ENCODE measurements at regions of chr19 and their contacts with region 1.

Region 1: GRCh38 chr19:17938092-17938845 is 5.5 kb downstream of the CCDC124 start:
- DNase-seq: peak; percentile 94
- H3K4me3 ChIP-seq: no peak overlapping the region
- H3K27ac ChIP-seq: no peak overlapping the region
- H3K4me1 ChIP-seq: peaks cover 8 to 29% (median 18%) of the 10 kb centered on the region in 6 donors
- H3K27me3 ChIP-seq: no peaks in the 10 kb centered on the region
- CTCF ChIP-seq: peak; percentile 88 to 97 (median 93)
- POLR2A ChIP-seq: no peak

Region 2: GRCh38 chr19:17865364-17866311 is 72.6 kb before region 1 on chr19:
- intact Hi-C with region 1: no loop called
- DNase-seq: no peak
- H3K4me3 ChIP-seq: no peak overlapping the region
- H3K27ac ChIP-seq: peak overlapping the region in 1 of 8 donors; percentile 33
- H3K4me1 ChIP-seq: peaks cover 12 to 48% (median 30%) of the 10 kb centered on the region in 6 donors
- H3K27me3 ChIP-seq: peaks cover 0 to 13% (median 1%) of the 10 kb centered on the region in 7 donors
- CTCF ChIP-seq: no peak
- POLR2A ChIP-seq: no peak

Region 3: GRCh38 chr19:17996826-17997316 is 58.6 kb after region 1 on chr19:
- intact Hi-C with region 1: loop called (anchors 2 kb)
- DNase-seq: peak; percentile 95
- H3K4me3 ChIP-seq: no peak overlapping the region
- H3K27ac ChIP-seq: no peak overlapping the region
- H3K4me1 ChIP-seq: peaks cover 2 to 38% (median 25%) of the 10 kb centered on the region in 6 donors
- H3K27me3 ChIP-seq: peaks cover 0 to 18% (median 0%) of the 10 kb centered on the region in 7 donors
- CTCF ChIP-seq: peak; percentile 98 to 99 (median 99)
- POLR2A ChIP-seq: no peak

Region 4: GRCh38 chr19:18013210-18014111 is 75.2 kb after region 1 on chr19:
- intact Hi-C with region 1: no loop called
- DNase-seq: no peak
- H3K4me3 ChIP-seq: no peak overlapping the region
- H3K27ac ChIP-seq: peak overlapping the region; percentile 4 to 88 (median 47)
- H3K4me1 ChIP-seq: peaks cover 18 to 100% (median 56%) of the 10 kb centered on the region in 6 donors
- H3K27me3 ChIP-seq: no peaks in the 10 kb centered on the region
- CTCF ChIP-seq: no peak
- POLR2A ChIP-seq: no peak

Measured in spleen (tissue), 13 donors.